ENCODE measurements at regions of chr11 and their contacts with region 1.

Region 1: GRCh38 chr11:123054301-123055065 is 7.5 kb downstream of the HSPA8 start:
- DNase-seq: peak; percentile 39
- ATAC-seq: peak; percentile 73
- H3K4me3 Mint-ChIP-seq: peak overlapping the region; percentile 12
- H3K27ac Mint-ChIP-seq: peak overlapping the region; percentile 99
- H3K4me1 Mint-ChIP-seq: peaks cover 39% of the 10 kb centered on the region
- H3K27me3 Mint-ChIP-seq: no peaks in the 10 kb centered on the region
- CTCF ChIP-seq: peak; percentile 83

Region 2: GRCh38 chr11:122727101-122727929 is 327.2 kb before region 1 on chr11:
- CTCF ChIA-PET with region 1: no interaction called
- POLR2A ChIA-PET with region 1: no interaction called
- intact Hi-C with region 1: loop called (anchors 10 kb)
- DNase-seq: peak; percentile 68
- ATAC-seq: peak; percentile 49
- H3K4me3 Mint-ChIP-seq: peak overlapping the region; percentile 69
- H3K27ac Mint-ChIP-seq: peak overlapping the region; percentile 93
- H3K4me1 Mint-ChIP-seq: peaks cover 72% of the 10 kb centered on the region
- H3K27me3 Mint-ChIP-seq: no peaks in the 10 kb centered on the region
- CTCF ChIP-seq: no peak

Region 3: GRCh38 chr11:123033895-123034294 is 20.6 kb before region 1 on chr11:
- CTCF ChIA-PET with region 1: interaction called, 16 read pairs
- POLR2A ChIA-PET with region 1: interaction called, 14 read pairs
- intact Hi-C with region 1: no loop called
- DNase-seq: no peak
- ATAC-seq: no peak
- H3K4me3 Mint-ChIP-seq: no peak overlapping the region
- H3K27ac Mint-ChIP-seq: no peak overlapping the region
- H3K4me1 Mint-ChIP-seq: peaks cover 3% of the 10 kb centered on the region
- H3K27me3 Mint-ChIP-seq: peaks cover 1% of the 10 kb centered on the region
- CTCF ChIP-seq: no peak

Region 4: DNA sequence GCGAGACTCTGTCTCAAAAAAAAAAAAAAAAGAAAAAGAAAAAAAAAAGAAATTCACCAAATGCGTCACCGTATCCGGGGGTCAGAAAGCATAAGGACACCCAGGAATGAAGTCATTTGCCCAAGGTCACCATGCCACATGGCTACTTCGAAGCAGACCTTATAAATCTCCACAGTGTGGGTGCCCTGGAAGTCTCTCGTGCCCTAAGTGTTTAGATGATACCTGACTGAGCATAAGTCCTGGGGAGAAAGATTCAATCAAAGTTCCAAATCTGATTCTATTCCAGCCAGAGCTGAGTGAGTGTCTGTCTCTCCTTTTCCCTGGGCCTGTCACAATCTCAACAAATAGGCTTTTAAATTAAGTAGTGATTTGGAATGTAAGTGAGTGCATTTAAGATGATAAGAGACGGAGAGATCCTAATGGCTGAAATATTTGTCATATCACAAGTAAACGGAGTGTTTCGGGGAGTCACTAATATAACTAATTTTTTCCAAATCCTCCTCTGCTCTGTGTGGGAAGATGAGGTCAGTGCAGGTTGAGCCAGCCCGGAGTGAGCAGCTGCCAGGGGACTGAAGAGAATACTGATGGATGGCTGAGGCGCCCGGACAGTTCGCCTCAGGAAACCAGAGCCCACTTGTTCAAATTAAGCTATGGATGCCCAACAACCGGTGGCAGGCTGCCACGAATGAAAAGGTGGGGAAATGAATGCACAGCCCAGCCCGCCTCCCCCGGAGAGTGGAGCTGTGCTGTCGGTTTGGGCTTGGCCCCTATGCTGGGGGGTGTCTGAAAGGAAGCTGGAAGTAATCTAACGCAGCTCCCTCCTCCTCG is 14.7 kb before region 1 on chr11:
- CTCF ChIA-PET with region 1: interaction called, 22 read pairs
- POLR2A ChIA-PET with region 1: interaction called, 64 read pairs
- intact Hi-C with region 1: no loop called
- DNase-seq: no peak
- ATAC-seq: no peak
- H3K4me3 Mint-ChIP-seq: no peak overlapping the region
- H3K27ac Mint-ChIP-seq: no peak overlapping the region
- H3K4me1 Mint-ChIP-seq: no peaks in the 10 kb centered on the region
- H3K27me3 Mint-ChIP-seq: peaks cover 1% of the 10 kb centered on the region
- CTCF ChIP-seq: no peak

Region 5: GRCh38 chr11:123083623-123084029 is 29.1 kb after region 1 on chr11:
- CTCF ChIA-PET with region 1: interaction called, 9 read pairs
- POLR2A ChIA-PET with region 1: interaction called, 67 read pairs
- intact Hi-C with region 1: no loop called
- DNase-seq: peak; percentile 71
- ATAC-seq: peak; percentile 37
- H3K4me3 Mint-ChIP-seq: no peak overlapping the region
- H3K27ac Mint-ChIP-seq: peak overlapping the region; percentile 74
- H3K4me1 Mint-ChIP-seq: peaks cover 35% of the 10 kb centered on the region
- H3K27me3 Mint-ChIP-seq: no peaks in the 10 kb centered on the region
- CTCF ChIP-seq: no peak